ENCODE measurements at regions of chr4 and their contacts with region 1.

Region 1: DNA sequence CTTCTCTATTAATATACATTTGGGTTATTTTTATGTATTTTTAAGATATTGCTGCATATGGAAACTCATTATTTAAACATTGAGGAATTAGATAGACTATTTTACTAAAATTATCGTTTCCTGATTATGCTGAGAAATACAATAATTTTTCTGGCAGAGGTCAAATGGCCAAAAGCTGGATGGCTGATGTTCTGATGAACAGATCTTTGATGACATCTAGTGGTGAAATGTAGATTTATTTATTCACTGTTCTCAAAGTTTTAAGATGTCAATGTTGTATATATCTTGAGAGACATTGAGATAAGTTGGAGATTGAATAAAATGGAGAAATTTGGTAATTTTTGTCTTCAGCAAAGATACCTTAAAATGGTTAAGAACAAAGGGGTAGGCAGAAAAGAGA is 96.2 kb downstream of the UGT8 start:
- DNase-seq: peak; percentile 11
- ATAC-seq: peak; percentile 48
- H3K4me3 ChIP-seq: no peak overlapping the region
- H3K27ac ChIP-seq: no peak overlapping the region
- H3K4me1 ChIP-seq: peaks cover 14% of the 10 kb centered on the region
- H3K27me3 ChIP-seq: no peaks in the 10 kb centered on the region
- CTCF ChIP-seq: peak; percentile 43 to 58 (median 44); a peak in 4 of 6 replicates
- EP300 ChIP-seq: no peak
- POLR2A ChIP-seq: no peak
- RAD21 ChIP-seq: peak; percentile 80

Region 2: GRCh38 chr4:114025176-114025777 is 669.5 kb before region 1 on chr4:
- CTCF ChIA-PET with region 1: no interaction called
- POLR2A ChIA-PET with region 1: no interaction called
- RAD21 ChIA-PET with region 1: no interaction called
- SMC1A ChIA-PET with region 1: no interaction called
- in situ Hi-C with region 1: no loop called
- intact Hi-C with region 1: no loop called
- DNase-seq: peak; percentile 33
- ATAC-seq: peak; percentile 92
- H3K4me3 ChIP-seq: no peak overlapping the region
- H3K27ac ChIP-seq: no peak overlapping the region
- H3K4me1 ChIP-seq: peaks cover 4% of the 10 kb centered on the region
- H3K27me3 ChIP-seq: no peaks in the 10 kb centered on the region
- CTCF ChIP-seq: no peak
- EP300 ChIP-seq: peak in 1 of 2 experiments; percentile 70; a peak in 1 of 4 replicates
- POLR2A ChIP-seq: no peak
- RAD21 ChIP-seq: no peak

Region 3: DNA sequence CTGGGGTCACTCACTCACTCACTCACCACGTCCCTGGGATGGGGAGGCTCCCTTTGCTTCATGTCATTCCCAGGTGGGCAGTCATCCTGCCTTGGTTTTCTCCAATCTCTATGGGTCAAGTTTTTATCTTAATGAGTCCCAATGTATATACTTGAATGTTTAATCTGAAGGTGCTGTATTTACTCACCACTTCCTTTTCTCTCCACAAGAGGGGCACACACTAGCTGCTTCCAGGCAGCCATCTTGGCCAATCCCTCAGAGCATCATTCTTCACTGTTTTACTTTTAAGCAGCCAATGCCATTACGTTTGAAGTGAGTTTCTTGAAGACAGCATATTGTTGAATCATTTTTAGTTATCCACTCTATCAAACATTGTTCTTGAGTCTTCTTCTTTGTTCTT is 561.9 kb before region 1 on chr4:
- CTCF ChIA-PET with region 1: no interaction called
- POLR2A ChIA-PET with region 1: no interaction called
- RAD21 ChIA-PET with region 1: no interaction called
- SMC1A ChIA-PET with region 1: no interaction called
- in situ Hi-C with region 1: no loop called
- intact Hi-C with region 1: loop called (anchors 10 kb)
- DNase-seq: no peak
- ATAC-seq: peak; percentile 86
- H3K4me3 ChIP-seq: no peak overlapping the region
- H3K27ac ChIP-seq: no peak overlapping the region
- H3K4me1 ChIP-seq: no peaks in the 10 kb centered on the region
- H3K27me3 ChIP-seq: no peaks in the 10 kb centered on the region
- CTCF ChIP-seq: peak; percentile 14 to 49 (median 47); a peak in 5 of 6 replicates
- EP300 ChIP-seq: no peak
- POLR2A ChIP-seq: no peak
- RAD21 ChIP-seq: 0 out of 2 replicates have a peak, but pooled peaks have one; percentile 11

Region 4: DNA sequence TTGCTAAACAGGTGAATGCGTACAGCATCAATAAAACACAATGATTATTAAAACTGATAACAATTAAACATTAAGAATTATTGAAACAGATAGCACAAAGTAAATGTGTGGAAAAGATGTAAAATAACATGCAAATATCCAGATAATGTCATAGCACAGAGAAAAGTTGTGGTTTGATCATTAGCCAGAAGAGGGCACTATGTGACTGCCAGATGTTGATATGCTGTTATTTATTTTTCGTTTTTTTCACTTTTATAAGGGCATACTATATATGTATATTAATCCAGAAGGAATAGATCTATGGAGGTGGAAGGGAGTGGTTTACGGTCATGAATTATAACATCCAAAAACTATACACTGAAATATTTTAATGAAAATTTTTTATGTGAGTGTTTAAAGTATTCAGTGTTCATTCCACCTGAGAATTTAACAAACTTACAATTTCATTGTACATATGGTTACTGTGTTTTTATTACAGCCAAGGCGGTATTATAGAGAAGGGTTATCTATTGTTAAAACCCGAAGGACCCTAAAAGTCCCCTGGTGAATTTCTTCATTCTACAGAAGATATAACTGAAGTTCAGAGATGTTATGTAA is 308.0 kb before region 1 on chr4:
- CTCF ChIA-PET with region 1: interaction called, 55 read pairs
- POLR2A ChIA-PET with region 1: no interaction called
- RAD21 ChIA-PET with region 1: interaction called, 13 read pairs
- SMC1A ChIA-PET with region 1: interaction called, 12 read pairs
- in situ Hi-C with region 1: loop called (anchors 10 kb)
- intact Hi-C with region 1: loop called (anchors 1 kb)
- DNase-seq: peak; percentile 5
- ATAC-seq: peak; percentile 67
- H3K4me3 ChIP-seq: no peak overlapping the region
- H3K27ac ChIP-seq: no peak overlapping the region
- H3K4me1 ChIP-seq: no peaks in the 10 kb centered on the region
- H3K27me3 ChIP-seq: no peaks in the 10 kb centered on the region
- CTCF ChIP-seq: peak; percentile 49 to 76 (median 53)
- EP300 ChIP-seq: no peak
- POLR2A ChIP-seq: no peak
- RAD21 ChIP-seq: peak; percentile 92

Region 5: DNA sequence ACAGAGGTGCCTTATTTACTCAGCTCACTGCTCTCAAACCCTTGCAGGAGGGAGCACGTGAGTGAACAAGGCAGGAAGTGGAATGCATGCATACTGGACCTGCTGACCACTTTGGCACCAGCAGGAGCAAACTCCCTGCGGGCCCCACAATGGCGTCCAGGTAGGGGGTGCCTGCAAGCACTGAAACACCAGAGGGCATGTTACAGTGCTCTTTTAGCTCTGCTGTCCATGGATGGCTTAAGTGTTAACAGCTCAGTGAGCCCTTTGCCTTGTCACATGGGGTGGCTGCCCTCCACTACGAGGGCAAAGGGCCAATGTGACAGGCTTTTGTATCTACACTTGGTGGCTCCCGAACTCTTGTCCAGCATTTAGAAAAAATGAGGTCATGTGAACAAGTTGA is 295.7 kb before region 1 on chr4:
- CTCF ChIA-PET with region 1: interaction called, 3 read pairs
- POLR2A ChIA-PET with region 1: no interaction called
- RAD21 ChIA-PET with region 1: no interaction called
- SMC1A ChIA-PET with region 1: interaction called, 3 read pairs
- in situ Hi-C with region 1: loop called (anchors 10 kb)
- intact Hi-C with region 1: no loop called
- DNase-seq: no peak
- ATAC-seq: no peak
- H3K4me3 ChIP-seq: no peak overlapping the region
- H3K27ac ChIP-seq: no peak overlapping the region
- H3K4me1 ChIP-seq: no peaks in the 10 kb centered on the region
- H3K27me3 ChIP-seq: no peaks in the 10 kb centered on the region; a peak in 1 of 4 replicates
- CTCF ChIP-seq: no peak
- EP300 ChIP-seq: no peak
- POLR2A ChIP-seq: no peak
- RAD21 ChIP-seq: no peak

Region 6: DNA sequence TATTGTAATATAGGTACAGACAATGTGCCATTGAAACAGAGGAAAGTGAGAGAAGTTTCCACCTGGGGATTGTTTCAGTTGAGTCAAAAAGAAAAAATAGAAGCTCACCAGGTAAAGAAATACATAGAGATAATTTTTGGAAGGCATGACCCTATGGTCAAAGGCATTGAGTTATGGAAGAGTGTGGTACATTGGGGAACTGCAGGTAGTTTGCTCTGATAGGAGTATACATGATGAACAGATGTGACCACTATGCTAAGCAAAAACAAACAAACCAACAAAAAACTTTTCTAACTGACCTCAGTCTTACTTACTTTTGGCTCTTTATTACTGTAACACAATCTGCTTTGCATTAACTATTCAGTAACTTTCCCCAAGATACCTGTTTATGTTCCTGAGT is 10.3 kb before region 1 on chr4:
- CTCF ChIA-PET with region 1: interaction called, 10 read pairs
- POLR2A ChIA-PET with region 1: no interaction called
- RAD21 ChIA-PET with region 1: interaction called, 3 read pairs
- SMC1A ChIA-PET with region 1: interaction called, 3 read pairs
- in situ Hi-C with region 1: no loop called
- intact Hi-C with region 1: no loop called
- DNase-seq: no peak
- ATAC-seq: no peak
- H3K4me3 ChIP-seq: no peak overlapping the region
- H3K27ac ChIP-seq: no peak overlapping the region
- H3K4me1 ChIP-seq: no peaks in the 10 kb centered on the region
- H3K27me3 ChIP-seq: no peaks in the 10 kb centered on the region
- CTCF ChIP-seq: no peak
- EP300 ChIP-seq: no peak
- POLR2A ChIP-seq: no peak
- RAD21 ChIP-seq: no peak

Region 7: DNA sequence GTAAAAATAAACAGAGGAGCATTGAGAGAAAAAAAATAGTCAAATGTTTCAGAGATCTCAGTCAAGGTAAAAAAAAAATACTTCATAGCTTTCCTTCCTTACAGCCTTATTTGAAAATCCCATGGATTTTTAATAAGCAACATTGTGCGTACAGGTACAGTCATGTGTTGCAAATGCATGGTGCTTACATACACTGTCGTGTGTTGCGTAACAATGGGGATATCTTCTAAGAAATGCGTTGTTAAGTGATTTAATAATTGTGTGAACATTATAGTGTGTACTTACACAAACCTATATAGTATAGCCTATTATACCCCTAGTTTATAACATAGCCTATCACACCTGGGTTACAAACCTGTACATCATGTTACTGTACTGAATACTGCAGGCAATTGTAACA is 75.9 kb after region 1 on chr4:
- CTCF ChIA-PET with region 1: no interaction called
- POLR2A ChIA-PET with region 1: no interaction called
- RAD21 ChIA-PET with region 1: no interaction called
- SMC1A ChIA-PET with region 1: no interaction called
- in situ Hi-C with region 1: no loop called
- intact Hi-C with region 1: no loop called
- DNase-seq: no peak
- ATAC-seq: no peak
- H3K4me3 ChIP-seq: no peak overlapping the region
- H3K27ac ChIP-seq: no peak overlapping the region
- H3K4me1 ChIP-seq: no peaks in the 10 kb centered on the region
- H3K27me3 ChIP-seq: no peaks in the 10 kb centered on the region
- CTCF ChIP-seq: no peak
- EP300 ChIP-seq: no peak
- POLR2A ChIP-seq: no peak
- RAD21 ChIP-seq: no peak

Measured in GM12878 (cell line).